ENCODE measurements at regions of chr7 and their contacts with region 1.

Region 1: GRCh38 chr7:35906191-35906908 is 105.5 kb downstream of the SEPTIN7 start:
- DNase-seq: no peak
- H3K4me3 ChIP-seq: no peak overlapping the region
- H3K27ac ChIP-seq: peak overlapping the region in 4 of 8 donors; percentile 8 to 59 (median 26)
- H3K4me1 ChIP-seq: peaks cover 0 to 14% (median 7%) of the 10 kb centered on the region in 6 donors
- H3K27me3 ChIP-seq: no peaks in the 10 kb centered on the region
- CTCF ChIP-seq: peak; percentile 70 to 94 (median 89)
- POLR2A ChIP-seq: no peak

Region 2: GRCh38 chr7:35424869-35425495 is 481.4 kb before region 1 on chr7:
- intact Hi-C with region 1: loop called (anchors 10 kb)
- DNase-seq: peak; percentile 81
- H3K4me3 ChIP-seq: no peak overlapping the region
- H3K27ac ChIP-seq: no peak overlapping the region
- H3K4me1 ChIP-seq: no peaks in the 10 kb centered on the region
- H3K27me3 ChIP-seq: peaks cover 0 to 7% (median 0%) of the 10 kb centered on the region in 7 donors
- CTCF ChIP-seq: peak; percentile 39 to 77 (median 61)
- POLR2A ChIP-seq: no peak

Region 3: GRCh38 chr7:35716038-35716803 is 190.1 kb before region 1 on chr7:
- intact Hi-C with region 1: loop called (anchors 5 kb)
- DNase-seq: no peak
- H3K4me3 ChIP-seq: peak overlapping the region in 2 of 8 donors; percentile 7 to 13
- H3K27ac ChIP-seq: peak overlapping the region in 2 of 8 donors; percentile 9 to 37
- H3K4me1 ChIP-seq: peaks cover 0 to 11% (median 6%) of the 10 kb centered on the region in 6 donors
- H3K27me3 ChIP-seq: no peaks in the 10 kb centered on the region
- CTCF ChIP-seq: no peak
- POLR2A ChIP-seq: no peak

Measured in spleen (tissue), 13 donors.